H1 (cell line): ENCODE measurements at regions of chr1 and their contacts with region 1.

Region 1: DNA sequence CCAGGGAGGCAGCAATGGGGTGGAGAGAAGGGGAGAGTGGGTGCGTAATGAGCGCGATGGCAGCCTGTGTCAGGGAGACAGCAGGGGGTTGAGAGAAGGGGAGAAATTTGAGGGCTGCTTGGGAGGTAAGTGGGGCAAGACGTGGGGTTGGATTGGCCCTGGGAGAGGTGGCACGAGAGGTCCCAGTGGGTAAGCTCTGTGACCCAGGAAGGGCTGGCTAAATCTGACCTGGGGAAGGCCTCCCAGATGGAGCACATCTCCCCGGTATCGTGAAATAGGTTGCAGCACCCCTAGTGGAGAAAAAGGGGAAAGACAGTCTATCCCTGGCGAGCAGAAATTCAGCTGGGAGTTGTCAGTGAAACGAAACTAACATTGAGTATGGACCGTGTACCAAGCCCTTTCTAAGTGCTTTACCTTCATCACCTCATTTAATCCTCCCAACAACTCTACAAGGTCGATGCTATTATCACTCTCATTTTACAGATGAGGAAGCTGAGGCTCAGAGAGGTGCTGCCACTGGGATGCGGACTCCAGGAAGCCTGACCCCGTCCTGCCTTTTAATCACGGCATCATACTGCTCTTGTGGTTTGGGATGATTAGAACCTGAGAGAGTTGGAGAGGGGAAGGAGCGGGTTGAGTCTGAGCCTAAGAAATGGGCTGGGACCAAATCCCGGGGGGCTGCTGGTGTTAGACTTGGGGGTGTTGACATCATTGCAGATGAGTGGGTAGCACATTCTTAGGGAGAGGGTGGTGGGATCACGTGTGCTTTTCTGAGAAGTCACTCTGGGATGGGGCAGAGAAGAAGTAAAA is 56.6 kb upstream of the RPL11 start:
- DNase-seq: peak in 1 of 2 experiments; percentile 71
- H3K4me3 ChIP-seq: no peak overlapping the region
- H3K27ac ChIP-seq: no peak overlapping the region
- H3K4me1 ChIP-seq: peaks cover 0 to 17% (median under 1%) of the 10 kb centered on the region in 4 experiments; a peak in 5 of 7 replicates
- H3K27me3 ChIP-seq: no peaks in the 10 kb centered on the region
- CTCF ChIP-seq: peak; percentile 60 to 97 (median 74)
- EP300 ChIP-seq: no peak
- POLR2A ChIP-seq: no peak
- RAD21 ChIP-seq: peak; percentile 74 to 85

Region 2: DNA sequence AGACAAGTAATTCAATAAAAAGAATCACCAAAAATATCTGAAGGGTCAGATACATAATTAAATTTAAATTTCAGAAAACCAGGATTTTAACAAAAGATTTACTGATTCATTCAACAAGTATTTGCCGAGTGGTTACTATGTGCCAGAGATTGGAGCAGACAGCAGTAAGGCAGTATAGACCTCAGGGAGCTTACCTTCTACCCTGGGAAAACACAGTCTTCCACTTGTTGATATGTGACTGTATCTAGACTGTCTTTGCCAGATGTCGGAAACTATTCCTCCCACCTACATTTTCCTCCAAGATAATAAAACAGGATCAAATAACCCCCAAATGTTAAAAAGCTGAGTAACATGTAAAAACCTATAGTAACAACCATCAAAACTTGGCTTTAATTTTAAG is 297.2 kb before region 1 on chr1:
- CTCF ChIA-PET with region 1: no interaction called
- POLR2A ChIA-PET with region 1: no interaction called
- DNase-seq: no peak
- H3K4me3 ChIP-seq: no peak overlapping the region
- H3K27ac ChIP-seq: no peak overlapping the region
- H3K4me1 ChIP-seq: peaks cover 0 to 6% (median 2%) of the 10 kb centered on the region in 4 experiments; a peak in 1 of 7 replicates
- H3K27me3 ChIP-seq: no peaks in the 10 kb centered on the region
- CTCF ChIP-seq: no peak
- EP300 ChIP-seq: no peak
- POLR2A ChIP-seq: no peak
- RAD21 ChIP-seq: no peak

Region 3: DNA sequence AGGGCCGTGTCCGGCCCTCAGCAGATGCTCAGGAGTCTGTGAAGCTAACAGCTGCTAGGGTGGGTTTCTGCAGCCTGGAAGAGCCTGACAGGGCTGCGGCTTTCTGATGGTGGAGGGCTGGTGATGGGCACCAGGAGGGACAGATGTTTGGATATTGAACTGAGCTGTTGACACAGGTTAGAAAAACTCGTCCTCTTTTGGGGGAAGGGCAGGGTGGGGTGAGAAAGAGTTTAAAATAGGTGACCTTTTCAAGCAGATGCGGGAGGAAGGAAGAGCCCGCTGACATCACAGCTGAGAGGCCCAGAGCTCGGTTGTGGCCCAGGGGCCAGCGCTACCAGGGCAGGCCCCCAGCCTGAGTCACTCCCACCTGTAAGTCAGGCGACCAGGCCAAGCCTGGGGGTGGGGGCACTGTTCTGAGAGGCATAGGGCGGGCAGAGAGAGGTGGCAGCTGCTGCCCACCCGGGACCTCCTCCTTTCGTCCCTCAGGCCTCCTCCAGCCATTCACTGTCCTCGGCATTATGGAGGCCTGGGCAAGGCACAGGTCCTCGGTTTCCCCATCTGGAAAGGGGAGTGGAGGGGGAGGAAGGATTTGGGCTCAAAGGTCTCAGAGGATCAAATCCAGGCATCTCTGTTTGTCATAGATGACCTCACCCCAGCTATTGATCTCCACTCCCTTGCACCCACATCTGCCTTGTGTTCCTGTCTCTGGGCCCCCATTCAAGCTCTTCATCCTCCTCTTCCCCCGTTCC is 43.4 kb before region 1 on chr1:
- CTCF ChIA-PET with region 1: interaction called, 32 read pairs
- POLR2A ChIA-PET with region 1: no interaction called
- DNase-seq: no peak
- H3K4me3 ChIP-seq: no peak overlapping the region
- H3K27ac ChIP-seq: no peak overlapping the region
- H3K4me1 ChIP-seq: peaks cover under 1 to 19% (median 8%) of the 10 kb centered on the region in 4 experiments
- H3K27me3 ChIP-seq: no peaks in the 10 kb centered on the region; a peak in 1 of 7 replicates
- CTCF ChIP-seq: no peak
- EP300 ChIP-seq: no peak
- POLR2A ChIP-seq: no peak
- RAD21 ChIP-seq: no peak

Region 4: GRCh38 chr1:23613191-23614031 is 21.6 kb before region 1 on chr1:
- CTCF ChIA-PET with region 1: interaction called, 67 read pairs
- POLR2A ChIA-PET with region 1: no interaction called
- DNase-seq: no peak
- H3K4me3 ChIP-seq: no peak overlapping the region
- H3K27ac ChIP-seq: 0 out of 2 replicates have a peak overlapping the region, but pooled peaks have one; percentile 25
- H3K4me1 ChIP-seq: peaks cover 0 to 11% (median 4%) of the 10 kb centered on the region in 4 experiments; a peak in 5 of 7 replicates
- H3K27me3 ChIP-seq: no peaks in the 10 kb centered on the region
- CTCF ChIP-seq: no peak
- EP300 ChIP-seq: no peak
- POLR2A ChIP-seq: no peak
- RAD21 ChIP-seq: no peak

Region 5: DNA sequence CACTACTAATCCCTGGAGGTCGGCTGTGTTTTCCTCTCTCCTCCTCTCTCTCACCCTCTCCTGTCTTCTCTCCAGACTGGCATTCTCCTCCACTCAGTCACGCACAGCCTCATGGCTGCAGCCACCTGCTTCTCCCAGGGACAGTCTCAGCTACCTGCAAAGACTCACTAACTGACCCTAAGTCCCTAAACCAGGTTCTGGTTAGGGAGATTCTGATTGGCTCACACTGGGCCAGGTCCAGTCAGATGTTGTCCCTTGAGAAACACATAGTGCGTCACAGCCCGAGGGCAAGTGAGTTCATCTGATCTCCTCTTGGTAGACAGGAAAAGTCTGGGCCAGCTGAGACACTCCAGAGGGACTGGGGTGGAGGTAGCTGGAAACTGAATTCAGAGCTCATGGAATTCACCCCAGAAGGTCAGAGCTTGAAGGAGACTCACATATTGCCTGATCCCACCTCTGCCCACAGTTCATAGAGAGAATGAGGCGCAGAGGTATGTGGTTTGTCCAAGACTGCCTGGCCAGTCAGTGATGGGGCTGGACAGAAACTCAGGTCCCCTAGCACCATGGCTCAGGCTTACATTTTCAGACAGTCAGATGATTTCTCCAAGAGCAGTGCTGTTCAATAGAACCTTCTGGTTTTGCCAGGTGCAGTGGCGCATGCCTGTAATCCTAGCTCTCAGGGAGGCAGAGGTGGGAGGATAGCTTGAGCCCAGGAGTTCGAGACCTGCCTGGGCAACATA is 16.2 kb after region 1 on chr1:
- CTCF ChIA-PET with region 1: interaction called, 222 read pairs
- POLR2A ChIA-PET with region 1: no interaction called
- DNase-seq: no peak
- H3K4me3 ChIP-seq: no peak overlapping the region
- H3K27ac ChIP-seq: no peak overlapping the region
- H3K4me1 ChIP-seq: no peaks in the 10 kb centered on the region
- H3K27me3 ChIP-seq: no peaks in the 10 kb centered on the region
- CTCF ChIP-seq: no peak
- EP300 ChIP-seq: no peak
- POLR2A ChIP-seq: no peak
- RAD21 ChIP-seq: no peak

Region 6: GRCh38 chr1:23854568-23854967 is 219.5 kb after region 1 on chr1:
- CTCF ChIA-PET with region 1: no interaction called
- POLR2A ChIA-PET with region 1: no interaction called
- DNase-seq: no peak
- H3K4me3 ChIP-seq: no peak overlapping the region
- H3K27ac ChIP-seq: no peak overlapping the region
- H3K4me1 ChIP-seq: no peaks in the 10 kb centered on the region
- H3K27me3 ChIP-seq: no peaks in the 10 kb centered on the region
- CTCF ChIP-seq: peak in 2 of 3 experiments; percentile 5 to 19; a peak in 1 of 4 replicates
- EP300 ChIP-seq: no peak
- POLR2A ChIP-seq: no peak
- RAD21 ChIP-seq: peak; percentile 19 to 45; a peak in 2 of 4 replicates